A549 (cell line): ENCODE measurements at regions of chr13 and their contacts with region 1.

Region 1: DNA sequence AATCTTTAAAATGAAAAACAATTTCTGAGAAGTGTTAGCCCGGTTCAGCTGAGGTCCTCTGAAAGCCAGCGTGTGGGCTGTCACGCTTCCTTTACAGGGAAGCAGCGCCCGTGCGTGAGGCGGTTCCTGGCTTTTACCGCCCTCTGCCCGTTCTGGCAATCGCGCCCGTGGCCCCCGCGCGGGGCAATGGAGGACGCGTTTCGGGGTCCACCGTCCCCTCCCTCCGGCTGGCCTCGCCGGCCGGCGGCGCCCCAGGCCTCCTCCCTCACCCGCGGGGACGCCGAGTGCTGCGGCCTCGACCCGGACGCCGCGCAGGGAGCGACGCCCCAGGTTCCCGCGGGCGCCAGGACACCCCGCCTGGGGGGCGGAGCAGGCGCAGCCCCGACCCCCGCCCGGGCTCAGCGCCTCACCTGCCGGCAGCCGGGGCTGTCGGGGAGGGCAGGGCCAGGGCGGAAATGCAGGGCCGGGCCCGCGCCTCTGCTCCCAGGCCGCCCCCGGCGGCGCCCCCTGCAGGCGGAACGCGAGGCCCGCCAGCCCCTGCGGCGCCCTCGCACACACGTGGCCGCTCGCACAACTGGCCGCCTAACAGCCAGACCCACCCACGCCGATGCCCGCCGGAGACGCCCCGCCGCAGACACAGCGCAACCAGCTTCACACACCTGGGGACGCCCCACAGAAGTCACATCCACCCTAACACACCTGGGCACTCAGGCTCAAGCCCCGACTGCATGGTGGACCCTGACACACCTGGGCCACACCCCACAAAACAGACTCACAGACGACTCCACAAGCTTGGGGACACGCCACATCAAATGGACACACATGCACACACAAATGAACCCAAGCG is at the start of gene GGACT:
- DNase-seq: peak; percentile 62 to 73
- ATAC-seq: peak; percentile 99 to 100
- H3K4me3 ChIP-seq: peak within 1 kb of the TSS; percentile 85
- H3K27ac ChIP-seq: peak within 1 kb of the TSS; percentile 86 to 96
- H3K4me1 ChIP-seq: 0 out of 3 replicates have a peak, but pooled peaks cover 4% of the 10 kb centered on the region
- CTCF ChIP-seq: peak; percentile 67
- EP300 ChIP-seq: no peak
- POLR2A ChIP-seq: peak; percentile 49
- RAD21 ChIP-seq: no peak; a peak in 1 of 5 replicates
- polyA plus RNA-seq, gene GGACT: 6.1 and 8.6 TPM in 2 replicates

Region 2: GRCh38 chr13:100573121-100573520 is 15.4 kb before region 1 on chr13:
- CTCF ChIA-PET with region 1: interaction called, 27 read pairs
- POLR2A ChIA-PET with region 1: no interaction called
- DNase-seq: peak; percentile 39 to 80
- ATAC-seq: peak; percentile 82 to 95; a peak in 5 of 6 replicates
- H3K4me3 ChIP-seq: no peak overlapping the region
- H3K27ac ChIP-seq: no peak overlapping the region
- H3K4me1 ChIP-seq: no peaks in the 10 kb centered on the region
- CTCF ChIP-seq: peak; percentile 70
- EP300 ChIP-seq: no peak
- POLR2A ChIP-seq: no peak
- RAD21 ChIP-seq: peak; percentile 40 to 46